Transverse colon (tissue), 4 donors: ENCODE measurements at regions of chr3 and their contacts with region 1.

Region 1: DNA sequence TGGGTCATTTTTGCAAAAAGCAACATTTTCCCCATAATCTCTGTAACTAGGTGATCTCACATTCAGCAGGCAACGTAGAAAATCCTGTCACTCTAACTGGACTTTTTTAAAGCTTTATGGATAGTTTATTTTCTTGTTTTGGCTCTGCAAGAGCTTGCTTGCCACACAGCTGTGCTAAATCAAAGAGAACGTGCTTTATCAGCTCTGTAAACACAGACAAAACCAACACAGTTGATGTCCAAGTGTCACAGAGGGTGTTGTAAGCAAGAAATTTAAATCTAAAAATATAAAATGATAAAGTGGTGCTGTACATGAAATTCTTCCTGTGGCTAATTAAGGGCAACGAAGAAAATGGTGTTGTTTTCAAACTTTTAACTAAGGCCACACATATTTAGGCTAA is 97.5 kb upstream of the STAC start:
- DNase-seq: no peak
- H3K4me3 ChIP-seq: no peak overlapping the region
- H3K27ac ChIP-seq: no peak overlapping the region
- H3K4me1 ChIP-seq: no peaks in the 10 kb centered on the region
- H3K27me3 ChIP-seq: no peaks in the 10 kb centered on the region
- CTCF ChIP-seq: no peak
- EP300 ChIP-seq: no peak
- POLR2A ChIP-seq: no peak

Region 2: DNA sequence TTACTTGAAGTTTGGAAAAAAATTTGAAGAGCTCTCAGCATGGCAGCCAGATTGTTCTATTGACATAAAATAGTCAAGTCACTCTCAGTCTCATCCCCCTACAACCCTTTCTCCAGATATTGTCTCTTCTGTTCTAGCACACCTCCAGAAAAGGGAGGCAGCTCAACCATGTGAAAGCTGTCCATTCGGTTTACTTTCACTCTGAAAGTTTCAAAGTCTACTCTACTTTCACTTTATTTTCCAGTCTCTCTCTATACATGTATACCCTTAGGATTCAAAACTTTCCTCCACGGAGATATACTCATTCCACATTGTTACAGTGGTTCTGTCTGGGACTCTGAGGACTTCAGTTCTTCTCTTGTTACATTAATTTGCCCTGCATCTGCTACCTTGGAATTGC is 13.5 kb before region 1 on chr3:
- in situ Hi-C with region 1: no loop called
- intact Hi-C with region 1: loop called (anchors 1 kb)
- DNase-seq: no peak
- H3K4me3 ChIP-seq: no peak overlapping the region
- H3K27ac ChIP-seq: no peak overlapping the region
- H3K4me1 ChIP-seq: no peaks in the 10 kb centered on the region
- H3K27me3 ChIP-seq: no peaks in the 10 kb centered on the region
- CTCF ChIP-seq: no peak
- EP300 ChIP-seq: no peak
- POLR2A ChIP-seq: no peak